Activated CD4-positive, alpha-beta T cell treated with anti-CD3 and anti-CD28 coated beads for 36 hours (primary cell): ENCODE measurements at regions of chr15 and their contacts with region 1.

Region 1: DNA sequence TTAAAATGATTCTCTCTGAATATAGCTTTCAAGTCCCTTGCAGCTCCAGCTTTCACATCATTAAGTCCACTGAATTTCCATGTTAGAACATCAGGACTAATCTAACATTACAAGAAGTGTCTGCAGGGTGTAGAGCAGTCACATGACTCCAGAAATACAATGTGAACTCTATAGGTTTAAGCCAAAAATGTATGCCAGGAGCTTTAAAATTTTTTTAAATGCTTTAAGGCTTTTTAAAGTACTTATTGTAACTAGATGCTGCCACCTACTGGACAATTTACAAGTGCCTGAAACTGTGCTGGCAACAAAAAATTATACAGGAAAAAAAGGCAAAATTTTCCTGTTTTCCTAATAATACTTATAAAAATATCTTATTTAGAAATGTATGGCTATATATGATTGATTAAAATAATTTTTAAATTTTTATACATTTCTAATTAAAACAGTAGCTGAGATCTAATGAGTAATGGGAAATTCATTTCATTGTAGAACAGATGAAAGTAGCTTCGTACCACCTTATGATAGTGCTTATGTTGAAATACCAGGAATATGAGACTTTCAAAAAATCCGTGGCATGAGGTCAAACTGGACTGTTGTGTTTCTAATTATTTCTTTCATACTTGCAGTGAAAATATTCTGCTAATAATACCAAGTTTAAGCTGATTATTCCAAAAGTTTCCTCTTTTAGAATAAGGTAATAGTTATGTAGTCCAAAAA is 25.7 kb downstream of the FSIP1 start:
- DNase-seq: no peak
- ATAC-seq: no peak
- H3K4me3 Mint-ChIP-seq: no peak overlapping the region
- H3K27ac Mint-ChIP-seq: no peak overlapping the region
- H3K4me1 Mint-ChIP-seq: no peaks in the 10 kb centered on the region
- H3K27me3 Mint-ChIP-seq: peaks cover 5% of the 10 kb centered on the region

Region 2: GRCh38 chr15:39125904-39126303 is 631.1 kb before region 1 on chr15:
- CTCF ChIA-PET with region 1: interaction called, 3 read pairs
- POLR2A ChIA-PET with region 1: no interaction called
- intact Hi-C with region 1: loop called in 1 of 2 experiments (anchors 10 kb)
- DNase-seq: peak; percentile 56
- ATAC-seq: no peak
- H3K4me3 Mint-ChIP-seq: no peak overlapping the region
- H3K27ac Mint-ChIP-seq: no peak overlapping the region
- H3K4me1 Mint-ChIP-seq: no peaks in the 10 kb centered on the region
- H3K27me3 Mint-ChIP-seq: peaks cover 7% of the 10 kb centered on the region

Region 3: DNA sequence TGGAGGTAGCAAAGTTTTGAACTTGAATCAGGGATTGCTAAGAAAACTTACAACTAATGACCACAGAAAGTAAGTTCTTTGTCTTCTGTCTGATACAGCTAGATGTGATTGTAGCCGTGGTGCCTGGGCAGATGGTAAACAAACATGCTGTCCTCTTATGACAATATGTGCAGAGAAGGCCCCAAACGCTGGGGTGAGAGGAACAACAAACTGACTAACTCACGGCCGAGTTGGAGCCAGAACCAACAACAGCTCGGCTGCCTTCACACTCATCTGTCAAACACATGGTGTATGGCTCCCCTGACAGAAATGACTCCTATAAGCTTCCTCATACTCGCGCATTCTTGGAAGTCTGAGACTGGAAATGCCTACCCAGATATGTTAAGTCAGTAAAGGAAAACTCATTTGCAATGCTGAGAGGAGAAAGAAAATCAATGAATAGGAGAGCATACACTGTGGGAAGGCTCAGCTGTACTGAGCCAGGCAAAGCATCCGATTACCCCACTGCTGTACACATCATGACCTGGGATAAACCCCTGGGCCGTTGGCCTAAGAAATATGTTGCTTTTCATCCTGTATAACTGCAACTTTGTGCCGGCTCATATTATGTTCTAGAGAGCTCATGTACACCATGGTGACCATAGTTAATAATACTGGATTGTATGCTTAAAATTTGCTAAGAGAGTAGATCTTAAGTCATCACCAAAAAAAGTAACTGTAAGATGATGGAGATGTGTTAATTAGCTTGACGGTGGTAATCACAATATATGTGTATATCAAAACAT is 170.4 kb before region 1 on chr15:
- CTCF ChIA-PET with region 1: interaction called, 37 read pairs
- POLR2A ChIA-PET with region 1: no interaction called
- intact Hi-C with region 1: loop called in 1 of 2 experiments (anchors 2 kb)
- DNase-seq: no peak
- ATAC-seq: no peak
- H3K4me3 Mint-ChIP-seq: no peak overlapping the region
- H3K27ac Mint-ChIP-seq: no peak overlapping the region
- H3K4me1 Mint-ChIP-seq: peaks cover 2% of the 10 kb centered on the region
- H3K27me3 Mint-ChIP-seq: peaks cover 22% of the 10 kb centered on the region

Region 4: DNA sequence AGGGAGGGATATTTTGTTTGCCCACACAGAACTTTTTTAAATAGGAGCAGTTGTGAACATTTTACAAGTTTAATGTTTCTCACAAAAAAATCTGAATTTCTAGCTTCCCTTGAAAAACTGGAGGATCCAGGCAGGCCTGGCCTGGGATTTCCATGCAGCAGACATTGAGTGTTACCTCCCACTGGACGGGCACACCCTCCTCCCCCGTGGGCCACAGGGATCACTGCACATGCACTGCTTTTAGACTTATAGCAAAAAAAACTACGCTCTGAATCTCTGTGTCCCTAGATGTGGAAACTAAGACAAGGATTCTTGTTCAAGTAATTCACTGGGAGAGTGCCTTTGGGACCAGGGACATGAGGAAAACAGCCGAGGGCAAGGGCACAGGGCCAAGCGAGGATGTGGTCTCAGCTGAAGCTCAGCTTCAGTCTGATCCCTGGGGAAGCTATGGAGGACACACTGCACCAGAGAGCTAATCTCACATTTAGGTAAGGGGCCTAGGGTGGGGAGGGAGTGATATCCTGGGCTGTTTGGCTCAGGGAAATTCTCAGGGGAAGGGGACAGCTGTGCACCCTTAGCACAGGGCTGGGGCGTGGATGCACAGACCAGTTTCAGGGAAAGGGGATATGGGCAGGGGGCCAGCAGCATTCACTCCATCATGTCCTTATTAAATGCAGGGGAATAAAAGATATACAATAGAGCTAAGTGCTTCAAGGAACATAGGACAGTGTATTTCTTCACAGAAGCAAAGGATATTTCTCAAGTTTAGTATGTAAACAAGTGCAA is 20.4 kb before region 1 on chr15:
- CTCF ChIA-PET with region 1: interaction called, 37 read pairs
- POLR2A ChIA-PET with region 1: no interaction called
- intact Hi-C with region 1: no loop called
- DNase-seq: no peak
- ATAC-seq: no peak
- H3K4me3 Mint-ChIP-seq: no peak overlapping the region
- H3K27ac Mint-ChIP-seq: no peak overlapping the region
- H3K4me1 Mint-ChIP-seq: no peaks in the 10 kb centered on the region
- H3K27me3 Mint-ChIP-seq: no peaks in the 10 kb centered on the region

Region 5: GRCh38 chr15:39788108-39788507 is 31.1 kb after region 1 on chr15:
- CTCF ChIA-PET with region 1: interaction called, 12 read pairs
- POLR2A ChIA-PET with region 1: no interaction called
- intact Hi-C with region 1: no loop called
- DNase-seq: peak; percentile 46
- ATAC-seq: peak; percentile 84
- H3K4me3 Mint-ChIP-seq: no peak overlapping the region
- H3K27ac Mint-ChIP-seq: no peak overlapping the region
- H3K4me1 Mint-ChIP-seq: peaks cover 48% of the 10 kb centered on the region
- H3K27me3 Mint-ChIP-seq: no peaks in the 10 kb centered on the region